ENCODE measurements at regions of chr15 and their contacts with region 1.

Region 1: DNA sequence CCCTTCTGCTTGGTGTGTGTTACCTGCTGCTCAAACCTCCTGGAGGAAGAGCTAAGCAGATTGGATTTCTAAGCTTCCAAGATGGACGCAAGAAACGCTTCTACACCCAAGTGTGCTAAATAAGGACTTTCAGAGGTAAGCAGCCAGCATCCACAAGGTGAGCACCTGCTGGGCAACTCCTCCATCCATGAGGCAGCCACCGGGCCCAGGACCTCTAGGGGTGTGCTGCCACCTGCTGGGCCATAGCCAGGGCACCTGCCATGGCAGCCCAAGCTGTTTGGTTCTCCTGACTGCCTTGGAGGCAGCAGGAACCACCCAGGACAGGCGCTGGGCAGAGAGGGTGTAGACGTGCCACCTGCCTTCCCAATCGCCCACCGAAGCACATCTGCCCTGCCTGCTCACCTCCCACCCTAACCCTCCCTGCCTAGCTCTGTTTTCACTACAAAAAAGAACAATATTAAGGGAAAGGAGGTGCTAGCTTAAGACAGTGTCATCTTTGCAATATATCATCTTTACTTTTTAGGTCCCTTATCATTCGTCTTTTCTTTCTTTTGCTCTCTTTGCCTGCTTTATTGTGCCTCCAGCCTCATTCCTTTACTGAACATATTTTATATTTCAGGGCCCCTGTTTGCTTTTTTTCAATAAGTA is 12.9 kb downstream of the C15orf62 start:
- DNase-seq: peak; percentile 83
- H3K4me3 Mint-ChIP-seq: no peak overlapping the region
- H3K27ac Mint-ChIP-seq: no peak overlapping the region
- H3K4me1 Mint-ChIP-seq: peaks cover 17% of the 10 kb centered on the region
- H3K27me3 Mint-ChIP-seq: no peaks in the 10 kb centered on the region
- CTCF ChIP-seq: peak; percentile 72

Region 2: GRCh38 chr15:40593588-40594428 is 188.9 kb before region 1 on chr15 and contains the start of gene KNL1:
- CTCF ChIA-PET with region 1: interaction called, 7 read pairs
- POLR2A ChIA-PET with region 1: no interaction called
- intact Hi-C with region 1: loop called (anchors 2 kb)
- DNase-seq: peak; percentile 95
- H3K4me3 Mint-ChIP-seq: peak within 1 kb of the TSS; percentile 89
- H3K27ac Mint-ChIP-seq: peak within 1 kb of the TSS; percentile 100
- H3K4me1 Mint-ChIP-seq: peaks cover 11% of the 10 kb centered on the region
- H3K27me3 Mint-ChIP-seq: no peaks in the 10 kb centered on the region
- CTCF ChIP-seq: no peak
- total RNA-seq, gene KNL1: 7.9 and 11.4 TPM in 2 replicates

Region 3: DNA sequence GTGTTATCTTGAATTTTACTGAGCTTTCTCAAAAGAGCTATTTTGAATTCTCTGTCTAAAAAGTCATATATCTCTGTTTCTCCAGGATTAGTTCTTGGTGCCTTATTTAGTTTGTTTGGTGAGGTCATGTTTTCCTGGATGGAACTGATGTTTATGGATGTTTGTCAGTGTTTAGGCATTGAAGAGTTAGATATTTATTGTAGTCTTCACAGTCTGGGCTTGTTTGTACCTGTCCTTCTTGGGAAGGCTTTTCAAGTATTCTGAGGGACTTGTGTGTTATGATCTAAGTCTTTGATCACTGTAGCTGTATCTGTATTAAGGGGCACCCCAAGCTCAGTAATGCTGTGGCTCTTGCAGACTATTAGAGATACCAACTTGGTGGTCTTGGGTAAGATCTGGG is 98.3 kb before region 1 on chr15:
- CTCF ChIA-PET with region 1: interaction called, 18 read pairs
- POLR2A ChIA-PET with region 1: no interaction called
- intact Hi-C with region 1: loop called (anchors 5 kb)
- DNase-seq: no peak
- H3K4me3 Mint-ChIP-seq: no peak overlapping the region
- H3K27ac Mint-ChIP-seq: no peak overlapping the region
- H3K4me1 Mint-ChIP-seq: peaks cover under 1% of the 10 kb centered on the region
- H3K27me3 Mint-ChIP-seq: no peaks in the 10 kb centered on the region
- CTCF ChIP-seq: no peak

Region 4: GRCh38 chr15:40743921-40744814 is 38.5 kb before region 1 on chr15:
- CTCF ChIA-PET with region 1: interaction called, 27 read pairs
- POLR2A ChIA-PET with region 1: interaction called, 4 read pairs
- intact Hi-C with region 1: loop called (anchors 1 kb)
- DNase-seq: peak; percentile 88
- H3K4me3 Mint-ChIP-seq: no peak overlapping the region
- H3K27ac Mint-ChIP-seq: peak overlapping the region; percentile 33
- H3K4me1 Mint-ChIP-seq: peaks cover 7% of the 10 kb centered on the region
- H3K27me3 Mint-ChIP-seq: no peaks in the 10 kb centered on the region
- CTCF ChIP-seq: no peak

Region 5: DNA sequence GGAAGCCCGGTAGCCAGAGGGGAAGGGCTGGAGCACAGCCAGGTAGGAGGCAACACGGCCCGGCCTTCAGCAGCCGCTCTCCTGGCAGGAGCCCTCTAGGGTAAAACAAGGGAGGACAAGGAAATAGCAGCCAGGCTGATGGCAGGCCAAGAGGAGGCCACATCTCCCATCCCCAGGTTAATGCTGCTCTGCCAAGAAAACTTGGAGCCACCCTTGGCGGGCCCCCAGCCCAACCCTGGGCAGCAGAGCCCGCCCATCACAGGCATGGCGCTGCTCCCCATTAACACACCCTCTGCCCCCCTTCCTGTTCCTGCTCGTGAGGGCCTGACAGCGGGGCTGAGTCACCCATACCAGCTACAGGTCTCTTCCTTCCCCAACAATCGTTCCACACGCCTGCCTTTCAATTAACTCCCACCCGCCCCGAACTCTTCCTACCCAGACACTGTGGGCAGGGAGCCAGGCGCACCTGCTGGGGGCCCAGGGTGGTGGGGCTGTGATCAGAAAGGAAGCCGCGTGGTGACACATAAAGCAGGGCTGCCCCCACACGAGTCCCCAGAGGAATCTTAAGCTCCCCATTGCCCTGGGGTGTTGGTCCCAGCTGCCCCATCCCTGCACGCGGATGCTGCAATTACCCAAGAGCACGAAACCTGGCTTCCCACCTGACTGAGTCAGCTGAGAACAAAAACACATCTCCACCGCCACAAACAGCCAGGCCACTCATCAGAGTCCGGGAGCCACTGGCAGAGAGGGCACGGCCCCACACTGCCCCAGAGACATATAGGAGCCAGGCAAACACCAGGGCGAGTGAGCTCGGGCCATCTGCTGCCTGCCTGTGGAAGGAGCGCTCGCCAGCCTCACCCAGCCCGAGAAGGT is 13.2 kb before region 1 on chr15 and contains the start of gene C15orf62:
- CTCF ChIA-PET with region 1: interaction called, 22 read pairs
- POLR2A ChIA-PET with region 1: interaction called, 28 read pairs
- intact Hi-C with region 1: no loop called
- DNase-seq: peak; percentile 96
- H3K4me3 Mint-ChIP-seq: peak within 1 kb of the TSS; percentile 64
- H3K27ac Mint-ChIP-seq: peak within 1 kb of the TSS; percentile 84
- H3K4me1 Mint-ChIP-seq: peaks cover 48% of the 10 kb centered on the region
- H3K27me3 Mint-ChIP-seq: no peaks in the 10 kb centered on the region
- CTCF ChIP-seq: no peak
- total RNA-seq, gene C15orf62: 0.26 and 0.52 TPM in 2 replicates

Region 6: DNA sequence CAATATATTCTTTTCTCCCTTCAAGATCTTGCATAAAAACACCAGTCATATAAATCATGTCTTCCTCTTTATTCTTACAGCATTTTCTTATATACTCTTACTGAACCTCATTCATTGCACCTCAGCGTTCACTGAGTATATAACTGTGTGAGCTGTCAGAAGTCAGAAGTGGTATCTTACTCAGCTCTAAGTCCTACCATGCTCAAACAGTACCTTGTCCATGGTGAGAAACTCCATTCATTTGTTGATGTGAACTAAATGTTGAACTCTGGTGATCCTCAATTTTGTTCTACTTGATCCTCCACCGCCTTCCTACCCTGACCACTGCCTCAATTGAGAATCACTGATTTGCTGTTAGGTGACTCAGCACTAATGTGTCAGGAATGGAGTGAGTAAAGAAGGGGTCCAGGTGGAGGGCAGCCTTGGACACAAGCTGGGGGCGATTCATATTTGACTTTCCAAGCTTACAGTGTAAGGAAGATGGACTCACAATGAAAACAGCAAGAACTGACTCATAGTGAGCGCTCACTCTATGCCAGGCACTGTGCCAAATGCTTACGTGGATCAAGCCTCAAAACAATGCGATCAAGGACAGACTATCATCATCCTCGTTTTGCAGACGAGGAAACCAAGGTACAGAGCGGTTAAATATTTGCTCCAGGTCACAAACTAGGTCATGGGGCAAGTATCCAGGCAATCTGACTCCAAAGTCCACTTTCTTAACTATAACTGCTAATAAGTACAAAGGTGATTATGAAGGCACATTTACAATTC is 10.7 kb after region 1 on chr15:
- CTCF ChIA-PET with region 1: interaction called, 18 read pairs
- POLR2A ChIA-PET with region 1: interaction called, 4 read pairs
- intact Hi-C with region 1: no loop called
- DNase-seq: peak; percentile 99
- H3K4me3 Mint-ChIP-seq: no peak overlapping the region
- H3K27ac Mint-ChIP-seq: peak overlapping the region; percentile 70
- H3K4me1 Mint-ChIP-seq: peaks cover 33% of the 10 kb centered on the region
- H3K27me3 Mint-ChIP-seq: no peaks in the 10 kb centered on the region
- CTCF ChIP-seq: no peak